ENCODE measurements at regions of chr6 and their contacts with region 1.

Region 1: DNA sequence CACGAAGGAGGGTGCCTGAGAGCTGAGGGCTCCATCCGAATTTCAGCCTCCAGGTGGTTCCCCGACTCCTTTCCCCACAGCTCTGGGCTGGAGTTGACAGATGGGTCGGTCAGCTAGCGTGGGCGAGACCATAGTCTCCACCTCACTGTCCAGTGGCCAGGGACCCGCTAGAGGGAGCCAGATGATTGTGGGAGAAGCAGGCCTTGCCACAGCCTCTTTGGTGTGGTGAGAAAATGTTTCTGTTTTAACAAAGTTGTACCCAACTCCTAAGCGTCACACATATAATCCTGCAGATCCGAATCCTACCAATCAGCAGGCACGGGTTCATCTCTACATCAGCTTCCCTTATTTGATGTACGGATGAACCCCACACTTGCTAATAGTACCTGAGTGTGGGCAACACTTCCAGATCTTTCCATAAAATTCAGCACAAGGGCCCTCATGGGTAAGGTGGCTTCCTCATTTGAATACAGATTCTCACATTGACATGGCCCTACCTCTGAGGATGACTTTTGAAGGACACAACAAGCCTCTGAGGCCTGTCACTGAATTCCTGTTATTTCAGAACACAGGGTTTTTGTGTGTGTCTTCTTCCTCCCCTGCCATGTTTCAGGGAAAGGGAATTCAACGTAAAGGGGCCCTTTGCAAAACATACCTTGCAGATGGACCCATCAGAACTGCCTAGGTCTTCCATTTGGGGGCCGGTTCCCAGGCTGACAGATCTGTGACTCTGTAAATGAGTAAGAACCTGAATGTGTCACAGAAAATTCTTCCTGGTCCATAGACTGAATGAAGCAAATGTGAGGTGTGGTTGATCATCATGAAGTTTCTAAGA is 103.2 kb upstream of the DUSP22 start:
- DNase-seq: peak; percentile 93
- H3K4me3 Mint-ChIP-seq: peak overlapping the region; percentile 1
- H3K27ac Mint-ChIP-seq: peak overlapping the region; percentile 64
- H3K4me1 Mint-ChIP-seq: peaks cover 44% of the 10 kb centered on the region
- H3K27me3 Mint-ChIP-seq: peaks cover 2% of the 10 kb centered on the region

Region 2: DNA sequence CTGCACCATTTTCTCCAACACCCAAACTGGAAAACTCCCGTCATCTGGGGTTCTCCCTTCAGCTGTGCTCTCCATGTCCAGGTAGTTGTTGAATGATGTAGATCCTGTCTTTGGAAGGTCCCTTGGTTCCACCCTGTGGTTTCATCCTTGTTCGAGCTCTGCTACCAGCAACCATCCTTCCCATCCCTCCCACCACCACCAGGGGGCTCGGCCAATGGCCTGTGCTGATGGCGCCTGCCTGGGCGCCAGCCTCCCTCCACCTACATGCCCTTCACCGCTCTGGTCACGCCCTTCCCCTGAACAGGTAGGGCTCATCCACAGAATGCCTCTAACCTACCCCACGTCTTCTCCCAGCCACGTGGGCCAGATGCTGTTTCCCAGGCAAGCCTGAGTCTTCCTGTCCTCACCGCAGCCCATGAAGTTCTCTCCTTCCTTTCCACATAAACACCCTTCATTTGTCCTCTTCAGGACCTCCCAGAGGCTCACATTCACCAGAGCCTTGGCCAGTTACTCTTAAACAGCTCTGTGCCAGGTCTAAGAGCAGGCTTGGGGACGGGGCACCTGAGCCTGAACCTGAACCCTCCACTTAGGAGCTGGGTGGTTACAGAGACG is 28.1 kb after region 1 on chr6:
- CTCF ChIA-PET with region 1: interaction called, 9 read pairs
- POLR2A ChIA-PET with region 1: interaction called, 24 read pairs
- intact Hi-C with region 1: loop called (anchors 1 kb)
- DNase-seq: peak; percentile 52
- H3K4me3 Mint-ChIP-seq: no peak overlapping the region
- H3K27ac Mint-ChIP-seq: no peak overlapping the region
- H3K4me1 Mint-ChIP-seq: peaks cover 45% of the 10 kb centered on the region
- H3K27me3 Mint-ChIP-seq: peaks cover 18% of the 10 kb centered on the region

Region 3: GRCh38 chr6:251920-252319 is 62.9 kb after region 1 on chr6:
- CTCF ChIA-PET with region 1: interaction called, 4 read pairs
- POLR2A ChIA-PET with region 1: no interaction called
- intact Hi-C with region 1: loop called (anchors 2 kb)
- DNase-seq: no peak
- H3K4me3 Mint-ChIP-seq: no peak overlapping the region
- H3K27ac Mint-ChIP-seq: peak overlapping the region; percentile 61
- H3K4me1 Mint-ChIP-seq: peaks cover 30% of the 10 kb centered on the region
- H3K27me3 Mint-ChIP-seq: peaks cover 2% of the 10 kb centered on the region

Region 4: DNA sequence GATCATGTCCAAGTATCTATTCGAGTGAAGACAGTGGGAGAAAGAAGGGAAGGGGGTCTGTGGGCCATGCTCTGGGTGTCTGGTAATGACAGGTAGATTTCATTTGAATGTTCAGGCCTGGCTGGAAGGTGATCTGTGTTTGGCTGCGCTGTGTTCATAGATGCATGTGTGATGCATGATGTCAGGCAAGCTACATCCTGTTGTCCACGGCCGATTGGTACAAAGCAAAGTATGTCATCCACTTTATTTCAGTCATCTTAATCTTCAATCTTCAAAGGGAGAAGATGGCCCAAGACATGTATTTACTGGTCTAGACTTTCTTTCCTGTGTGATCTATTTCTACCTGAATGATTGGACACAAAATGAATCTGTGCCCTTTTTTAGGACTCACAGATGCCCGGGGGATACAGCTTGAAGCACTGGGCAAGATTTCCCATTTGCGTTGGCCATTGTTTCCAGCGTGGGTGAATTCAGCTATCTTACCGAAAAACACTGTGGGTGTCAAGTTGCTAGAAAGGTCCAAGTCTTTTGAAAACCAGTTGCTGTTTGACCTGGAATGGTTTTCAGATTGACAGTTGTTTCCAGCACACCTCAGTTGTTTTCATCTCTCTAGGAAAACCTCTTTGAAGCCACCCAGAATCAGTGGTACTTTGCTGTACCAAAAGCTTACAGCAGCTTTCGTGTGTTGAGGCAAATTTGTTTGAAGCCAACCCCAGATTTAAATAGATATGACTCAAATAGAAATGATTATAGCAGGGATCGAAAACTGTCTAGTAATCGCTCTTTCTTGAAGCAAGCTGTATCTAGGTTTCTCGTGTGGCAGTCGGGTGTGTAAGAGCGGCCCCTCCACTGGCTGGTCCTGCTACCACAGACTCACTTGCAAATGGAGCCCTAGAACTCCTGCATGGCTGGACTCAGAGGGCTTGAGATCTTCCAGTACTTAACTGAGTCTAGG is 130.4 kb after region 1 on chr6:
- CTCF ChIA-PET with region 1: interaction called, 10 read pairs
- POLR2A ChIA-PET with region 1: interaction called, 3 read pairs
- intact Hi-C with region 1: loop called (anchors 1 kb)
- DNase-seq: peak; percentile 55
- H3K4me3 Mint-ChIP-seq: no peak overlapping the region
- H3K27ac Mint-ChIP-seq: peak overlapping the region; percentile 60
- H3K4me1 Mint-ChIP-seq: peaks cover 20% of the 10 kb centered on the region
- H3K27me3 Mint-ChIP-seq: peaks cover 2% of the 10 kb centered on the region

Region 5: DNA sequence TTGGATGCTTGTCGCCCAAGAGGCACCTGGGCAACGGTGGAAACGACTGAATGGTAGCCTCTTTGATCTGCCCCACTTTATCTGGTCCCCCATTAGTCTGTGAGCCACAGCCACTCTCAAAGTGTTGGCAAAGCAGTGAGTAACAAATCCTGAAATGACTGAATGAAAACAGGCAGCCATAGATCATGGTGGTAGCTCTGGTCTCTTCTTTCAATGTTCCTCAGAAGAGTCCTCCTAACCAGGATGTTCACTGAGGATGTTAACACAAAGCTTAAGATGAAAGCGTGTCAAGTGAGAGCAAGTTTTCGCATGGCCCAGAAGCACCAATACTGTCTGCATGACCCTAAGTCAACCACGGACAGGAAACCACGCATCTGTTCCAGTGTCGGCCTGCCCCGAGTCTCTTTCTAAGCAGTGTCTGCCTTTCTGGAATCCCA is 309.8 kb after region 1 on chr6:
- CTCF ChIA-PET with region 1: no interaction called
- POLR2A ChIA-PET with region 1: interaction called, 6 read pairs
- intact Hi-C with region 1: loop called (anchors 2 kb)
- DNase-seq: peak; percentile 83
- H3K4me3 Mint-ChIP-seq: peak overlapping the region; percentile 61
- H3K27ac Mint-ChIP-seq: peak overlapping the region; percentile 93
- H3K4me1 Mint-ChIP-seq: peaks cover 83% of the 10 kb centered on the region
- H3K27me3 Mint-ChIP-seq: no peaks in the 10 kb centered on the region

Region 6: GRCh38 chr6:558089-558488 is 369.1 kb after region 1 on chr6:
- CTCF ChIA-PET with region 1: no interaction called
- POLR2A ChIA-PET with region 1: no interaction called
- intact Hi-C with region 1: loop called (anchors 2 kb)
- DNase-seq: no peak
- H3K4me3 Mint-ChIP-seq: no peak overlapping the region
- H3K27ac Mint-ChIP-seq: peak overlapping the region; percentile 87
- H3K4me1 Mint-ChIP-seq: peaks cover 60% of the 10 kb centered on the region
- H3K27me3 Mint-ChIP-seq: no peaks in the 10 kb centered on the region

Region 7: GRCh38 chr6:786946-787763 is 598.1 kb after region 1 on chr6:
- CTCF ChIA-PET with region 1: no interaction called
- POLR2A ChIA-PET with region 1: no interaction called
- intact Hi-C with region 1: loop called (anchors 1 kb)
- DNase-seq: peak; percentile 37
- H3K4me3 Mint-ChIP-seq: no peak overlapping the region
- H3K27ac Mint-ChIP-seq: no peak overlapping the region
- H3K4me1 Mint-ChIP-seq: peaks cover 17% of the 10 kb centered on the region
- H3K27me3 Mint-ChIP-seq: peaks cover 10% of the 10 kb centered on the region

Region 8: GRCh38 chr6:903761-904160 is 714.7 kb after region 1 on chr6:
- CTCF ChIA-PET with region 1: no interaction called
- POLR2A ChIA-PET with region 1: no interaction called
- intact Hi-C with region 1: no loop called
- DNase-seq: no peak
- H3K4me3 Mint-ChIP-seq: no peak overlapping the region
- H3K27ac Mint-ChIP-seq: no peak overlapping the region
- H3K4me1 Mint-ChIP-seq: no peaks in the 10 kb centered on the region
- H3K27me3 Mint-ChIP-seq: peaks cover 4% of the 10 kb centered on the region

Region 9: GRCh38 chr6:1453024-1453423 is 1264.0 kb after region 1 on chr6:
- CTCF ChIA-PET with region 1: no interaction called
- POLR2A ChIA-PET with region 1: no interaction called
- intact Hi-C with region 1: no loop called
- DNase-seq: no peak
- H3K4me3 Mint-ChIP-seq: no peak overlapping the region
- H3K27ac Mint-ChIP-seq: no peak overlapping the region
- H3K4me1 Mint-ChIP-seq: no peaks in the 10 kb centered on the region
- H3K27me3 Mint-ChIP-seq: peaks cover 18% of the 10 kb centered on the region

Measured in activated CD4-positive, alpha-beta memory T cell treated with anti-CD3 and anti-CD28 coated beads for 36 hours (primary cell).